Activated B cell treated with CpG ODN at 0.5 μM for 24 hours (primary cell): ENCODE measurements at regions of chr10 and their contacts with region 1.

Region 1: GRCh38 chr10:17144757-17145156 is 15.1 kb upstream of the CUBN start:
- DNase-seq: no peak
- ATAC-seq: no peak
- H3K4me3 Mint-ChIP-seq: no peak overlapping the region
- H3K27ac Mint-ChIP-seq: no peak overlapping the region
- H3K4me1 Mint-ChIP-seq: no peaks in the 10 kb centered on the region
- H3K27me3 Mint-ChIP-seq: peaks cover 2% of the 10 kb centered on the region
- CTCF ChIP-seq: no peak

Region 2: DNA sequence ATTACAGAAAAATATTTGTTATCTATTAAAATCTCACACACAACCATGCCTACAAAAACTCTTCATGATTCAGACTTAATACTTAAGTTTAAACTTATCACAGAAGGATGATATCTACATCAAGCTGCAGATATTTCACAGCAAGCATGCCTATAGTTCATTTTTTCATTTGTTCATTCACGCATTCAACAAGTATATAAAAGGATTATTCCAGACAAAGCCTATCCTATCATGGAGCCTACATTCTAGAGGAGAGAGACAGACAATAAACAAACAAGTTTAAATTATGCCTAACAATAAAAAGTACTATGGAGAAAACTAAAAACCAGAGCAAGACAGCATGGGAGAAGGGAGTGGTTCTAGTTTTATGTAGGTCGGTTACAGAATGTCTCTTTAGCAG is 45.8 kb after region 1 on chr10:
- CTCF ChIA-PET with region 1: no interaction called
- POLR2A ChIA-PET with region 1: no interaction called
- intact Hi-C with region 1: loop called (anchors 5 kb)
- DNase-seq: no peak
- ATAC-seq: no peak
- H3K4me3 Mint-ChIP-seq: no peak overlapping the region
- H3K27ac Mint-ChIP-seq: no peak overlapping the region
- H3K4me1 Mint-ChIP-seq: peaks cover 4% of the 10 kb centered on the region
- H3K27me3 Mint-ChIP-seq: no peaks in the 10 kb centered on the region
- CTCF ChIP-seq: no peak